Psoas muscle (tissue), 8 donors: ENCODE measurements at regions of chr3 and their contacts with region 1.

Region 1: DNA sequence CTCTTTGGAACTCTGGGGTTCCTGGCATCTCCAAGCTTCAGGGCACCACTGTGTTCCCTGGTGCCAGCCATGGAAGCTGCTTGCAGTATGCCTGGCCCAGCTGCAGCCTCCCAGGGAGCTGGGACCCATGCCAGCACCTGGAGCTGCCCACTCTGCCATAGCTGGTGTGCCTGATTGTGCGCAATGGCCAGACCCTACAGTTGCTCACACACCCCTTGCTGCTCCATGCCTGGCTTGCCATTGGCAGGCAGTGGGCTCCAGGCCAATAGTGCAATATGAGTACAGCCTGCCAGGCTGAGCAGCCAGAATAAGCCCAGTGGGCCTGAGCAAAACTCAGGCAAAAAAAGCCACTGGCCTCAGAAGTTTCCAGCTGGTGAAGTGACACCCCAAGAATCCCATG is 43.8 kb upstream of the LRRFIP2 start:
- DNase-seq: peak; percentile 26 to 69
- ATAC-seq: peak; percentile 48 to 85 (median 81)
- H3K4me3 ChIP-seq: no peak overlapping the region
- H3K27ac ChIP-seq: no peak overlapping the region
- H3K4me1 ChIP-seq: no peaks in the 10 kb centered on the region
- H3K27me3 ChIP-seq: no peaks in the 10 kb centered on the region
- CTCF ChIP-seq: no peak

Region 2: GRCh38 chr3:37024092-37024491 is 194.1 kb before region 1 on chr3:
- intact Hi-C with region 1: loop called (anchors 5 kb)
- DNase-seq: no peak
- ATAC-seq: no peak
- H3K4me3 ChIP-seq: no peak overlapping the region
- H3K27ac ChIP-seq: no peak overlapping the region
- H3K4me1 ChIP-seq: peaks cover 8% of the 10 kb centered on the region
- H3K27me3 ChIP-seq: no peaks in the 10 kb centered on the region
- CTCF ChIP-seq: peak; percentile 38